ENCODE measurements at regions of chr6 and their contacts with region 1.

Region 1: DNA sequence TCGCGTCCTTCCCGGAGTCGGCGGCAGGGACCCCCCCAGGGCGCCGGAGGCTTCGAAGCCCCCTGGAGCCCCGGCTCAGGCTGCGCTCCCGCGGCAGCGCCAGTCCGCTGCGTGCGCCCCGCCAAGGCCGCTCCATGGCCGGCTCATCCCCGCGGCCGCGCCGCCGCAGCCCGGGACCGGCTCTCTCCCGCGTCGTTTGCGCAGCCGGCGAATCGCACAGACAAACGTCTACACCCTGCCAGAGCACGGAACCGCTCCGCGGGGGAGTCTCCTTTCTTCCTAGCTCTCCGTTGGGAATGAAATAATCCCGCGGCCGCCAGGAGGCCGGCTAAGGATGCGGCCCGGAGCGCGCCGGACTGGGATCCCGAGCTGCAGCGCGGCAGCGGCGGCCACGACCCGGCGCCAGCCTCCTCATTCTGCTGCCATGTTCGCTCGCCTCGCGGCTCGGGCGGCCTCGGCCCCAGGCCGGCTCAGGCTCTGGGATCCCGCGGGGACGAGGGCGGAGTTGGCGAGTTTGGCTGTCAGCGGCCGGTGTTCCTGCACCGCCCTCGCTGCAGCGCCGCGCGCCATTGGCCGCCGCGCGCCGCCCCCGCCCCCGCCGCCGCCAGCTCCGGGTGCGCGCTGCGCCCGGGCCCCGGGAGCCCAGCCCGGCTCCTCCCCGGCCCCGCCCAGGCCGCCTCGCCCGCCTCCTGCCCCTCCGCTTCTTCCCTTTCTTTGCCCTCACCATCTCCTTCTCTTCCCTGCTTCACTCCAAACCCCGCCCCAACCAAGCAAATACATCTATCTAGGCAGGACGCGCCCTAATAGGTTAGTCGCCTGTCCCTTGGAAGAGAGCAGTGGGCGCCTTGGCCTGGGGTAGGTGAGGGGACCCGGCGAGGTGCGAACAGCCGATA is at the start of gene GFOD1:
- DNase-seq: peak; percentile 95
- H3K4me3 Mint-ChIP-seq: peak within 1 kb of the TSS; percentile 96
- H3K27ac Mint-ChIP-seq: peak within 1 kb of the TSS; percentile 88
- H3K4me1 Mint-ChIP-seq: peaks cover 42% of the 10 kb centered on the region
- H3K27me3 Mint-ChIP-seq: peaks cover 11% of the 10 kb centered on the region
- total RNA-seq, gene GFOD1: 9.8 and 10.2 TPM in 2 replicates

Region 2: DNA sequence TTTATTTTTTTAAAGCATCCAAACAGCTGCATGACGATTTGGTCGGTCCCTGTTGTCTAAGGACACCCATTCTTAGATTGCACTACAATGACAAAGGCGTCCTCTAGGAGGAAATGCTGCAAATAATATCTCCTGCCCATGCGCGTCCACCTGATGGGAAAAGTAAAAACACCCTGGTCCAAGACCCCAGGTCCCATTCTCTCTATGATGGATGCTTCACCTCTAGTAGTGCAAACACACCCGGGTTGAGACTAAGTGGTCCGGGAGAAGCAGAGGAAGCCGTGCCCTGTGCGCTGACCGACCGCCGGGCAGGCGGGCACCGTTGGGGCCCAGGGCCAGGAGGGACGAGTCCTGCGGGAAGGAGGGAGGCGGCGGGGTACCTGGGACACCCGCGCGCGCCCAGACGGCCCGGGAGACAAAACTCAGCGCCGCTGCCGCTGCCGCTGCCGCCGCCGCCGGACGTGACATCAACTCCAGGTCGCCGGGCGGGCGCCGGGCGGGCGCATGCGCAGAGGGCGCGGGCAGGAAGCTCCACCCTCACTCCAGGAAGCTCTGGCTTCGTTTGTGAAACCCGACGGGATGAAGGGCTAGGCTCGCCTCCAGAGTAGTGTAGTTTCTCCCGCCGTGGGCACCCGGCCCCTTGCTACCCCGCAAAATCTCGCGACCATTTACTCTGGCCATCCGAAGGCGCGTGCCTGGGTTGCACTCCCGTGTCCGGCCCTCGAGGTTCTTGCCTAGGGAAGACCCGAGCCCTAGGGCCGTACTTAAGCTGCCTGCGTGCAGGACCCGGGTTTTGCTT is 159.1 kb before region 1 on chr6 and contains the start of gene TBC1D7:
- intact Hi-C with region 1: loop called (anchors 2 kb)
- DNase-seq: peak; percentile 98
- H3K4me3 Mint-ChIP-seq: peak within 1 kb of the TSS; percentile 85
- H3K27ac Mint-ChIP-seq: peak within 1 kb of the TSS; percentile 96
- H3K4me1 Mint-ChIP-seq: peaks cover 34% of the 10 kb centered on the region
- H3K27me3 Mint-ChIP-seq: no peaks in the 10 kb centered on the region
- total RNA-seq, gene TBC1D7: 25.1 and 26.8 TPM in 2 replicates

Region 3: DNA sequence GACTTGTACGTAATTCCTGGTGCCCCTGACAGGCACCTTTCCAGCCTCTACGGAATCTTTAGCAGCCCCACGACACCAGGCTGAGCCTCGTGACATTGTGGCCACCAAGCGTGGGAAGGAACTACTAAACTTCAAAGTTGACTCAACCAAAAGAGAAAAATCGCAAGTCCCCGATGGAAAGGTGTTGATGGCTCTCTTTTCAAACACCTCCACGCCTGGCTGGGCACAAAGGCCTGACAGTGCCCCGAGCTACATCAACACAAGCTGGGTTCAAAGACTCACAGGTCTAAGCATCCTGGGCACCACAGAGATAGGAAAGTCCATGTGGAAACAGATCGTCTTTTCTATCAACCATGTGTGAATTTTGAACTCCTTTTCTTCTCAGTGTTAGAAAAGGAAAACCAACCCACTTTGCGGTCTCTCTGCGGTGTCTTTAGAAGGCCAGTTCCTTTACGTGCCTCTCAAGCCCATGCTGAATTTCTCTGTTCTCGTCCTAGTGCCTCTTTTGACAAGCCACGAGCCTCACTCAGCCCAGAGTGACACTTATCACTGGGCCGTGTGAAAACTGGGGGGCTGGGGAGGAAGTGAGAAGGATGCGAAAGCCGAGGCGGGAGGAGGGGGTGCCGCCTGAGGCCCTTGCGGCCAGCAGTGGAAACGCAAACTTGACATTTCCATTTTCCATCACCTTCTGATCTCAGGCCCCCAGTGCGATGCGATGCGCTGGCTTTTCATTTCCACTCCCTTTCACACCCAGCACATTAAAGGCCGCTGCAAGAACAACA is 59.4 kb before region 1 on chr6:
- intact Hi-C with region 1: loop called (anchors 1 kb)
- DNase-seq: peak; percentile 89
- H3K4me3 Mint-ChIP-seq: peak overlapping the region; percentile 71
- H3K27ac Mint-ChIP-seq: peak overlapping the region; percentile 96
- H3K4me1 Mint-ChIP-seq: peaks cover 65% of the 10 kb centered on the region
- H3K27me3 Mint-ChIP-seq: no peaks in the 10 kb centered on the region

Region 4: DNA sequence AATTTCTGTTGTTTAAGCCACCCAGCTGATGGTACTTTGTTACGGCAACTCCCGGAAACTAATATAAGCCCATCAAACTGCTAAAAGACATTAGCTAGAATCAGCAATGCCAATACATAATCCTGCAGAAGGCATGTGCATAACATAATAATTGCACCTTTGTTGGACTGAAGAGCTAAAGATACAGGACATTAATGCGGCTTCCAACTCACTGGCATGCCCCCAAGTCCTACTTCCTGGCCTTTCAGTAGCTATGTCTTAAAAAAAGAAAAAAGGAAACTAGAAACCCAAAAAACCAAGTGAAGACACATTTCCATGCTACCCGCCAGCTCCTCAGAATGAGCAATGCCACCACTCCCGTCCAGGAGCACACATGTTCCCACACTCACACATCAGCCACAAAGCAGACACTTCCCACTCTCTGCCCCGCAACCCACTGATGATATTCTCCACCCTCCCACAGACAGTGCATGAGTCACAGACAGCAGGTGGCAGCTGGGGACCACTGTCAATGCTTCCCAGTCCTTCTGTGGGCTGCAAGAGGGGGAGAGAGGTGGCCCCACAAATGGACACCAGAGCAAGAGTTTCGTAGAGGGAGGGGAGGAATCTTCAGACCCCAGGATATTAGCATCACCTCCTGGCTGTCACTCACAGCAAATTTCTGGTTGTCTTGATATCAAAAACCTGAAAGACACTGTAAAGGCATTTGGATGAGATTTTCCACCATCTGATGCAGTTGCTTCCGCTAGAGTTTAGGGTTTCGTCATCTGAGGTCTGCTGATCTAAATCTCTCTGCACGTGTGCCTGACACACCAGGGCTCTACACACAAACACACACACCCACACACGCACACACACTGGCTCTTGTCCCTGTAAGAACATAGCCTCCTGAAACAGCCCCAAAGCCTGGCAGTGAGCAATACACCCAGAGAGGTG is 32.8 kb before region 1 on chr6:
- intact Hi-C with region 1: loop called (anchors 1 kb)
- DNase-seq: peak; percentile 85
- H3K4me3 Mint-ChIP-seq: peak overlapping the region; percentile 42
- H3K27ac Mint-ChIP-seq: peak overlapping the region; percentile 93
- H3K4me1 Mint-ChIP-seq: peaks cover 43% of the 10 kb centered on the region
- H3K27me3 Mint-ChIP-seq: no peaks in the 10 kb centered on the region

Region 5: GRCh38 chr6:13466304-13467215 is 20.8 kb before region 1 on chr6:
- intact Hi-C with region 1: loop called (anchors 2 kb)
- DNase-seq: no peak
- H3K4me3 Mint-ChIP-seq: peak overlapping the region; percentile 60
- H3K27ac Mint-ChIP-seq: peak overlapping the region; percentile 88
- H3K4me1 Mint-ChIP-seq: peaks cover 52% of the 10 kb centered on the region
- H3K27me3 Mint-ChIP-seq: no peaks in the 10 kb centered on the region

Region 6: GRCh38 chr6:13614926-13615798 is 127.8 kb after region 1 on chr6 and contains the start of gene NOL7:
- intact Hi-C with region 1: loop called (anchors 1 kb)
- DNase-seq: peak; percentile 100
- H3K4me3 Mint-ChIP-seq: peak within 1 kb of the TSS; percentile 92
- H3K27ac Mint-ChIP-seq: peak within 1 kb of the TSS; percentile 96
- H3K4me1 Mint-ChIP-seq: peaks cover 33% of the 10 kb centered on the region
- H3K27me3 Mint-ChIP-seq: no peaks in the 10 kb centered on the region
- total RNA-seq, gene NOL7: 103 and 104 TPM in 2 replicates